H1 (cell line): ENCODE measurements at regions of chr6 and their contacts with region 1.

Region 1: DNA sequence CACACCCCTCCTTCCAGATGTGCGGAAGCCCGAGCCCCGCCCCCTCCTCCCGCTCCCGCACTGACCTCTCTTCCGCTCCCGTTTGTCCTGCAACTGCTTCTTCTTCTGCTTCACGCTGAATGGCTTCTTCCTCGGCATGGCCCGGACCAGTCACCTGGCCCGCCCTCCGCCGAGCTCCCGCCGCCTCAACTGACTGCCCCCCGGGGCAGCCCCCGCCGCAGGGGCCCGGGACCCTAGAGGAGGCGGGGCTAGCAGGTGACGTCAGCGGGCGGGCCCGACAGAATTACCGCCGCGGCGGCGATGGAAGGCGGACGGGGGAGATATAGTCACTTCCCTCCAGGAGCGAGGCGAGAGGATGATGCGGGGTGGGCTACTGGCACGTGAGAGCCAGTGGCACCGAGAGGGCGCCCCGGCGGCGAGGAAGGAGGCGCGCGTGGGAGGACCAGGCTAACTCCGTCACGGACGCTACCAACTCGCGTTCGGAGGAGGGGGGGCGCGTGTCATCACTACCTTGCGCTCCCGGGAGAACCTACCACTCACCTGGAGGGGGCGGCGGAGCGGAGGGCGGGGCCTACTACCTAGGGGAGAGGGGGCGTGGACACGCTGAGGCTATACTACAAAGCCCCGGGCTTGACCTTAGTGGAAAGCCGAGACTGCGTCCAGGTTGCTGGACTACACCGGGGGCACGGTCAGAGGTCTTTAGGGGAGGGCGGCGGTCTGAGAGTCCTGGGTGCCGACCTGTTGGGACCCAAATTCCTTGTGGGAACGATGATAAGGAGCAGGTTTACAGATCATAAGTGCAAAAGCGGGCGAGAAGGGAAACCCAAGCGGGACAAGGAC is at the start of gene GNL1:
- DNase-seq: peak; percentile 90 to 98
- H3K4me3 ChIP-seq: peak within 1 kb of the TSS; percentile 76 to 91 (median 89)
- H3K27ac ChIP-seq: peak within 1 kb of the TSS; percentile 93
- H3K4me1 ChIP-seq: peaks cover 0 to 3% (median 1%) of the 10 kb centered on the region in 4 experiments; a peak in 1 of 7 replicates
- H3K27me3 ChIP-seq: no peaks in the 10 kb centered on the region
- CTCF ChIP-seq: no peak
- EP300 ChIP-seq: peak in 1 of 2 experiments; percentile 99; a peak in 2 of 3 replicates
- POLR2A ChIP-seq: no peak
- RAD21 ChIP-seq: no peak
- total RNA-seq, gene GNL1: 67.8 and 75.4 TPM in 2 replicates

Region 2: GRCh38 chr6:30443657-30444450 is 112.4 kb before region 1 on chr6:
- CTCF ChIA-PET with region 1: no interaction called
- POLR2A ChIA-PET with region 1: no interaction called
- DNase-seq: no peak
- H3K4me3 ChIP-seq: peak overlapping the region; percentile 15 to 48 (median 24); a peak in 5 of 8 replicates
- H3K27ac ChIP-seq: no peak overlapping the region
- H3K4me1 ChIP-seq: peaks cover 0 to 5% (median 1%) of the 10 kb centered on the region in 4 experiments; a peak in 2 of 7 replicates
- H3K27me3 ChIP-seq: peaks cover 0 to 4% (median 2%) of the 10 kb centered on the region in 4 experiments; a peak in 2 of 7 replicates
- CTCF ChIP-seq: no peak
- EP300 ChIP-seq: no peak
- POLR2A ChIP-seq: no peak
- RAD21 ChIP-seq: no peak

Region 3: DNA sequence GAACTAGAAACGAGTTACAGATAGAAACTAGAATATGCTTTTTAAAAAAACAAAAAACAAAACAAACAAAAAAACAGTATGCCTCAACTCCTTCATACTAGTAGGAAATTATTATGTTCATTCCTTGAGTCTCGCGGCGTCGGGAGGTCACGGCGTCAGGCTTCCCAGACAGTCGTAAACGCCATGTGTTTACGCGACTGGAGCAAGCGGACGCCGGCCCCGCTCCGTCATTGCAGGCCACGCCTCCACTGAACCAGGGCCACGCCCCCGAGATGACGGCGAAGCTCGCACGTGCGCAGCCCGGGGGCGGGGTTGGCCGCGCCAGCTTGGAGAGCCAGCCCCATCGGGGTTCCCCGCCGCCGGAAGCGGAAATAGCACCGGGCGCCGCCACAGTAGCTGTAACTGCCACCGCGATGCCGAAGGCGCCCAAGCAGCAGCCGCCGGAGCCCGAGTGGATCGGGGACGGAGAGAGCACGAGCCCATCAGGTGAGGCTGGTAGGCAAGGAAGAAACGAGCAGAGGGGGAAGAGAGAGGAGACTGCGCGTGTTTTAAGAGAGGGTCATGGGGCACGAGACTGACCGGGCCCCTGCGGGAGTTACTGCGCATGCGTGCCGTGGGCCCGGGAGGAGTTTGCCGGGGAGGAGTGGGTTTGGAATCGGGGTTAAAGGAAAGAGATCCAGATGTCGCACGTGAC is 14.9 kb after region 1 on chr6 and contains the start of gene ABCF1:
- CTCF ChIA-PET with region 1: interaction called, 3 read pairs
- POLR2A ChIA-PET with region 1: interaction called, 68 read pairs
- DNase-seq: peak; percentile 90 to 100
- H3K4me3 ChIP-seq: peak within 1 kb of the TSS; percentile 88 to 98 (median 95)
- H3K27ac ChIP-seq: peak within 1 kb of the TSS; percentile 95
- H3K4me1 ChIP-seq: peaks cover 0 to 4% (median 2%) of the 10 kb centered on the region in 4 experiments; a peak in 5 of 7 replicates
- H3K27me3 ChIP-seq: no peaks in the 10 kb centered on the region
- CTCF ChIP-seq: no peak
- EP300 ChIP-seq: no peak
- POLR2A ChIP-seq: peak in 1 of 2 experiments; percentile 94; a peak in 2 of 3 replicates
- RAD21 ChIP-seq: no peak
- total RNA-seq, gene ABCF1: 119 and 123 TPM in 2 replicates

Region 4: DNA sequence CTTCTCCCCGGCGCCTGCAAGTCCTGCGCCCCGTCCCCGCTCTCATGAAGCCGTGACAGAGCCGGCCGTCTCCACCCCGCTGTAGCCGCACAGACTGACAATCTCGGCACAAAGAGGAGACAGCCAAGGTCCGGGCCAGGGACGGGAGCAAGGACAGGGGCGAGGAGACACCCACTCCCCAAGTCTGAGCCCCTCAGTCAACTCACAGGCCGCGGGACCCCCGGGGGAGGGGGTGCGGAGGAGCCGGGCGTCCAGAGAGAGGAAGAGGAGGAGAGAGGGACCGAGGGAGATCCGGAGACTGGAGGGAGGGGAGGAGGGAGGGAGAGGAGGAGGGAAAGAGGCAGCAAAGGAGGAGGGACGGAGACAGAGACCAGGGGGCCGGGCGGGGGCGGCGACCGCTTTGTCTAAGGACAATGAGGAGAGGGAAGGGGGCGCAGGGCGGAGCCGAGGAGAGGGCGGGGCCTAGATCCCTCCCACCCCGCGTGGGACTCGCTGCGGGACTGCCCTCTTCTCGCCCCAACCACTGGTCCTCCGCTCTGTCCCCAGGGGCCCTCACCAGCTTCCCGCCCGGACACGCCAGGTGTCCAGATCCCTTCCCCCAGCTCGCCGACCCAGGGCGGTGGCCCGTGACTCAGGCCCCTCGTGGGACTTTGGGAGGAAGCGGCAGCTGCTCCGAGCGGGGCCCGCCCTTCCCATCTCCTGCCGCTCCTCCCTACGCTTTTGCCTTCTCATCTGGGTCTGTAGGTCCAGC is 130.8 kb after region 1 on chr6:
- CTCF ChIA-PET with region 1: no interaction called
- POLR2A ChIA-PET with region 1: no interaction called
- DNase-seq: peak in 1 of 2 experiments; percentile 92
- H3K4me3 ChIP-seq: peak overlapping the region; percentile 49 to 97 (median 80)
- H3K27ac ChIP-seq: peak overlapping the region; percentile 35; the same call in 1 of the 2 replicates
- H3K4me1 ChIP-seq: peaks cover 7 to 49% (median 32%) of the 10 kb centered on the region in 4 experiments
- H3K27me3 ChIP-seq: no peaks in the 10 kb centered on the region
- CTCF ChIP-seq: no peak
- EP300 ChIP-seq: peak in 1 of 2 experiments; percentile 94; a peak in 1 of 3 replicates
- POLR2A ChIP-seq: no peak; a peak in 1 of 3 replicates
- RAD21 ChIP-seq: no peak